ENCODE measurements at regions of chr18 and their contacts with region 1.

Region 1: DNA sequence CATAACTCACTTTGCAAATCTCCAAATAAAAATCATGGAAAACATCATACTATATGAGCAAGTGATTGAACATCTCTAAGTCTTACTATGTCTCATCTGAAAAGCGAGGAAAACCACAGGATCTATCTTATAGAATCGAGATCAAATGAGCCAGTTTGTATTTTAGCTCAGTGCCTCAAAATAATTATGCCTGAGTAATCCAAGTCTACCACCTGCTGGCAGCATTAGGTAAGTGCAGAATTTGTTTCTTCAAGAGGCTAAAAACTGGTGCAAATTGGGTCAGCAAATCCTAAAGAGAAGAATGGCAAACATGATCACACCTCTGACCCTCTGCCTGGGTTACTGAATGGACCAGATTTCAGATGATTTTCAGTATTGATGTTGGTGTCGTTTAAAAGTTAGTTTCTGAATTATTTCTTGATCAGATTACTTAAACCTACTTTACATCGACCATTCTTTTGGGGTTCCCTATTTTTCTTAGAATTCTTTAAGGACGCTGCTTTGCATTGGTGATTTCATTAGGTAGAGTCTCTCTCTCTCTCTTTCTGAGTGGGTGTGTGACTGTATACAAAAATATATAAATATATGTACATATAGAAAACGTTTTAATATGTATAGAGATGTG is 12.7 kb upstream of the FHOD3 start:
- DNase-seq: peak; percentile 74
- ATAC-seq: peak; percentile 89
- H3K4me3 ChIP-seq: no peak overlapping the region
- H3K27ac ChIP-seq: no peak overlapping the region
- H3K4me1 ChIP-seq: no peaks in the 10 kb centered on the region
- H3K27me3 ChIP-seq: peaks cover 4% of the 10 kb centered on the region
- CTCF ChIP-seq: peak; percentile 96
- POLR2A ChIP-seq: peak; percentile 59; the same call in 1 of the 2 replicates
- RAD21 ChIP-seq: peak; percentile 98

Region 2: DNA sequence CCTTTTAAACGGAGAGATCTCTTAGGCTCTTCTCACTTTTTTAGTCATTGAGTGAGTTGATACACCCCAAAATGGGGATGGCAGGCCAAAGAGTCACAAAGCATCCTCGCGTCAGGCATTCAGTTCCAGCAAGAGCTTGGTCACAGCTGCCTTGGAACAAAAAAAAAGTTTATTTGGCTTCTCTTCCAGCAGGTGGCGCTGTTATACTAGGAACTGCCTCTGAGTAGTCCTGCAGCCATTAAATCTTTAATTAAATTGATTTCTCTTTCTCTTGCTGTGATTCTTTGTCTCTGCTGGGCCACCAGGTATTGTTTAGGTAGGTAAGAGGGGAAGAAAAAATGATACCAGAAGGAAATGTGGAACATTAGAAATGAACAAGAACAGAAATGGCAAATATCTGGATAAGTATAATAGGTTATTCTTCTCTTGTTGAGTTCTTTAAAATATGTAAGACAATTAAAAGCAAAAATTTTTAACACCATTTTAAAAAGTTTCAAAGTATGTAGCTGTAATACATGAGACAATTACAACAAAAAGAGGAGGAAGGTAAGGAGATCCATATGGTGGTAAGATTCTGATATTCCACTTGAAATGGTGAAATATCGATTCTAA is 528.2 kb before region 1 on chr18:
- CTCF ChIA-PET with region 1: no interaction called
- POLR2A ChIA-PET with region 1: no interaction called
- dilution Hi-C with region 1: no loop called
- in situ Hi-C with region 1: loop called (anchors 10 kb)
- intact Hi-C with region 1: loop called (anchors 1 kb)
- DNase-seq: peak; percentile 59
- ATAC-seq: peak; percentile 84
- H3K4me3 ChIP-seq: no peak overlapping the region
- H3K27ac ChIP-seq: no peak overlapping the region
- H3K4me1 ChIP-seq: no peaks in the 10 kb centered on the region
- H3K27me3 ChIP-seq: peaks cover 32% of the 10 kb centered on the region
- CTCF ChIP-seq: peak; percentile 85
- POLR2A ChIP-seq: peak; percentile 35; the same call in 1 of the 2 replicates
- RAD21 ChIP-seq: peak; percentile 87

Region 3: GRCh38 chr18:36015629-36016028 is 269.2 kb before region 1 on chr18:
- CTCF ChIA-PET with region 1: interaction called, 6 read pairs
- POLR2A ChIA-PET with region 1: no interaction called
- dilution Hi-C with region 1: no loop called
- in situ Hi-C with region 1: loop called (anchors 5 kb)
- intact Hi-C with region 1: loop called (anchors 1 kb)
- DNase-seq: no peak
- ATAC-seq: no peak
- H3K4me3 ChIP-seq: no peak overlapping the region
- H3K27ac ChIP-seq: no peak overlapping the region
- H3K4me1 ChIP-seq: peaks cover 2% of the 10 kb centered on the region; the same call in 1 of the 2 replicates
- H3K27me3 ChIP-seq: no peaks in the 10 kb centered on the region
- CTCF ChIP-seq: no peak
- POLR2A ChIP-seq: no peak
- RAD21 ChIP-seq: no peak

Measured in IMR-90 (cell line).